ENCODE measurements at regions of chr14 and their contacts with region 1.

Region 1: DNA sequence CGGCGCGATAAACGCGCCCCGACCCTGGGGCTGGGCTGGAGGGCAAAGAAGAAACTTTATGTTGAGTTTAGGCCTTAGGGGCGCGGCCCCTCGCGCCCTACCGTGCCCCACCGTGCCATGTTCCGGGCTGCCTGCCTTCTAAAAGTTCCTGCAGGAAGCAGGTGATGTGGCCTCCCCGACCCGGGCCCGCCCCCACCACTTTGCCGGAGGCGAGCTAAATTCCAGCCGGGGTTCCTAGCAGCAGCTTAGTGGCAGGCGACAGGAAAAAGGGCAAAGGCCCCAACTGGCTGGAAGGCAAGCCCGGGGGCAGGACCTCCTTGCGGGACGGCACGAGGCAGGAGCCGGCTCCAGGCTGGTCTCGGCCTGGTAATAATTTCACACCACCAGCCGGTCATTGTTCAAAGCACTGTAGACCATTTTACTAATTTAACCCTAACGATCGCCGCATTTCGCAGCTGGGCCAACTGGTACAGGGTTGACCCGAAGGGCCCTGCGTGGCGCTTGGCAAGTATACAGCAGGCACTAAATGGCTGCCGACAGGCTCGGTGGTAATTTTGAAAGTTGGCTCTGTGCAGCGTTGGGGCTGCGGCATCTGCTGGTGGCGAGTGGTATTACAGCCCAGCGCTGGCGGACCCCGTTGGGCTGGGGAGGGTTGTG is 895 bp upstream of the CCDC88C start:
- DNase-seq: no peak
- ATAC-seq: peak; percentile 49
- H3K4me3 ChIP-seq: peak overlapping the region; percentile 43
- H3K27ac ChIP-seq: peak overlapping the region; percentile 61
- H3K4me1 ChIP-seq: peaks cover 26% of the 10 kb centered on the region
- H3K27me3 ChIP-seq: no peaks in the 10 kb centered on the region
- CTCF ChIP-seq: peak; percentile 98 to 99 (median 99); a peak in 5 of 6 replicates
- EP300 ChIP-seq: no peak
- POLR2A ChIP-seq: no peak
- RAD21 ChIP-seq: peak; percentile 96

Region 2: GRCh38 chr14:91317381-91318308 is 100.9 kb before region 1 on chr14:
- CTCF ChIA-PET with region 1: interaction called, 242 read pairs
- POLR2A ChIA-PET with region 1: interaction called, 8 read pairs
- RAD21 ChIA-PET with region 1: interaction called, 160 read pairs
- SMC1A ChIA-PET with region 1: interaction called, 210 read pairs
- in situ Hi-C with region 1: loop called (anchors 5 kb)
- intact Hi-C with region 1: no loop called
- DNase-seq: no peak
- ATAC-seq: peak; percentile 22
- H3K4me3 ChIP-seq: no peak overlapping the region
- H3K27ac ChIP-seq: peak overlapping the region; percentile 80
- H3K4me1 ChIP-seq: peaks cover 47% of the 10 kb centered on the region
- H3K27me3 ChIP-seq: no peaks in the 10 kb centered on the region
- CTCF ChIP-seq: 0 out of 6 replicates have a peak, but pooled peaks of 1 of the 3 experiments have one; percentile 11
- EP300 ChIP-seq: no peak
- POLR2A ChIP-seq: peak; percentile 57
- RAD21 ChIP-seq: no peak

Region 3: DNA sequence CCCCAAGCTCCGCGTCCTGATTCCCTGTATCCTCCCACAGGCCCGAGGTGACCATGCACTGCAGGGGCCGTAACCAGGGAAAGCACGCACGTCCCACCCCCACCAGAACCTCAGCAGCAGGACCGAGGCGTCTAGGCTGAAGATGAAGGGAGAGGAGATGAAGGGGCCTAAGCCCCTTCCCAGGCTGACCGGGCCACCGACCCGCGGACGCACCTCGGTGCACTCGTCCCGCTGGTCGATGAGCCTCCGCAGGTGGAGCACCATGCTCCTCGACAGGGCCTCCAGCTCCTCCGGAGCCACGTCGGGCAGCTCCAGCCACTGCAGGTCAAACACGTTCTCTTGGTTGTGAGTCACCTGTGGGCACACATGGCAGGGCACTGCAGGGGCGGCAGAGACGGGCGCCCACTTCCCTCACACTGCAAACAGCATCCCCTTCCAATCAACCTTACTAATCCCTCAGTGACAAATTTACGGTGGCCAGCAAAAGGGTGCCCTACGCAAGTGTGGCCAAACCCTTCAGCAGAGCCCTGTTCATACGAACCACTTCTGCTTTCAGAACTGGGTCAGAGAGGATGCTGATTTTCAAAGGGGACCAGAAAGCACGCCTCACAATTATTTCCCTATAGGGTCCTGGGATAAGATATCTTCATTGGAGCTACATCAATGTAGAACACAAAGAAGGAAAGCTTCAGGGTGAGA is 78.7 kb before region 1 on chr14:
- CTCF ChIA-PET with region 1: interaction called, 4 read pairs
- POLR2A ChIA-PET with region 1: interaction called, 3 read pairs
- RAD21 ChIA-PET with region 1: interaction called, 21 read pairs
- SMC1A ChIA-PET with region 1: interaction called, 14 read pairs
- in situ Hi-C with region 1: no loop called
- intact Hi-C with region 1: no loop called
- DNase-seq: no peak
- ATAC-seq: no peak
- H3K4me3 ChIP-seq: no peak overlapping the region
- H3K27ac ChIP-seq: no peak overlapping the region
- H3K4me1 ChIP-seq: peaks cover 1% of the 10 kb centered on the region
- H3K27me3 ChIP-seq: no peaks in the 10 kb centered on the region
- CTCF ChIP-seq: no peak
- EP300 ChIP-seq: no peak
- POLR2A ChIP-seq: peak; percentile 15; the same call in 1 of the 2 replicates
- RAD21 ChIP-seq: no peak

Region 4: DNA sequence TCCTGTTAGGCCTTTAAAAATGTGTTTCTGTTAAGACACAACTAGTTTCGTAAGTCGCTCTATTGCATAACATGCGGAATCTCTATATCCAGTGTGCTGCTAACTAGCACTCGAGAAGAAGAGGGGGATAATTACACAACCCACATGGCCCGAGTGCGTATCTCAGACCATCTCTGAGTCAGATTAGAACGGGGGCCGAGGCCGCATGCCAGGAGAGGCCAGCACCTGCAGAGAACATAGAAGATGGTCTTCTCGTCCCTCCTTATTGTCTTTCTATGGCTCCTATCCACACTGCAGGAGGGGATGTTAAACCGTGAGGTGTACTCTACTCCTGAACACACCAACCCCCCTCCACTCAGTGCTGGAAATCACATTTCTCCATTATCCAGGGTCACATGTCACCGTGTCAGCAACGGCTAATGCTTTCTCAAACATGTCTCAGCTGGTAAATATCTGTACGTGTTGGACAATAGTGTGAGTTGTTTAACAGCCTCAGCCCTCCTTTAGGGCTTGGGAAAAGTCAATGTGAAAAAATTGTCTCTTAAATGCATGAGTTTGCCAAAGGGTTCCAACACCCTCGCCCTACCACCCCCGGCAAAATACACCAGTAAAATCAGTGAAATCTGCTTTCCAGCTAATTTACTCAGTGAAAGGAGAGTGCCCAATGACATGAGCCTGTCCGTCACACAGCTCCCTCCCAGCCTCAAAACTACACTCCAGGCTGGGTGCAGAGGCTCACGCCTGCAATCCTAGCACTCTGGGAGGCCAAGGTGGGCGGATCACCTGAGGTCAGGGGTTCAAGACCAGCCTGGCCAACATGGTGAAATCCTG is 57.1 kb before region 1 on chr14:
- CTCF ChIA-PET with region 1: interaction called, 70 read pairs
- POLR2A ChIA-PET with region 1: interaction called, 140 read pairs
- RAD21 ChIA-PET with region 1: interaction called, 236 read pairs
- SMC1A ChIA-PET with region 1: interaction called, 205 read pairs
- in situ Hi-C with region 1: no loop called
- intact Hi-C with region 1: loop called (anchors 2 kb)
- DNase-seq: no peak
- ATAC-seq: no peak
- H3K4me3 ChIP-seq: no peak overlapping the region
- H3K27ac ChIP-seq: no peak overlapping the region
- H3K4me1 ChIP-seq: peaks cover 61% of the 10 kb centered on the region
- H3K27me3 ChIP-seq: no peaks in the 10 kb centered on the region
- CTCF ChIP-seq: no peak
- EP300 ChIP-seq: no peak
- POLR2A ChIP-seq: no peak
- RAD21 ChIP-seq: no peak

Region 5: DNA sequence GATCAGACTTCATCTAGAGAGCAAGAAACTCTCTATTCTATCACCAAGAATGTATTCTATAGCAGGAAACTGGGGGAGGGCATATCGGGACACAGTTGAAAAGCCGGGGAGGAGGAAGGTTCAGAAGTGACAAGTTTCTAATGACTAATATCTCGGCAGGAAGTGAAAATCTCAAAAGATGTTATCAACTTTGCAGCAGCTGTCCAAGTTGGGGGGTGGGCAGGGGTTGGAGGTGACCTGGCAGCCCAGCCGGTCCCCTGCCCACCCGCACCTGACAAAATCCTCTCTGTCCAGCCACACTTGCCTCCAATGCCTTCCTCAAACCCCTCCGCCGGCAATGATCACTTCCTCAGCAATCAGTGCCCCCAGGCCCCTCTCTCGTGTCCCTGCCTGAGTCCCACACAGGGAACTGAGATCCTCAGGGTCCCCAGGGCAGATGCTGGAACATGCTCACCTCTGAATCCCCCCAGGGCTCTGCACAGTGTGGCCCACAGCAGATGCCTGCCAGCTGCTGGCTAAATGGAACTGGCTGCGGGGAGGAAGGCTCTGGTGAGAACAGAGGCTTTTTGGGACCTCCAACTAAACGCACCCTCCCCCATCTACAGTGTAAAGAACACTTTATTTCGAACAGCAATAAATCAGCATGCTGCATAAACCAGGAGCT is 44.8 kb before region 1 on chr14:
- CTCF ChIA-PET with region 1: interaction called, 35 read pairs
- POLR2A ChIA-PET with region 1: interaction called, 42 read pairs
- RAD21 ChIA-PET with region 1: interaction called, 104 read pairs
- SMC1A ChIA-PET with region 1: interaction called, 172 read pairs
- in situ Hi-C with region 1: no loop called
- intact Hi-C with region 1: loop called (anchors 2 kb)
- DNase-seq: peak; percentile 80
- ATAC-seq: peak; percentile 70
- H3K4me3 ChIP-seq: peak overlapping the region; percentile 41
- H3K27ac ChIP-seq: peak overlapping the region; percentile 99
- H3K4me1 ChIP-seq: peaks cover 96% of the 10 kb centered on the region
- H3K27me3 ChIP-seq: no peaks in the 10 kb centered on the region
- CTCF ChIP-seq: no peak
- EP300 ChIP-seq: peak; percentile 92 to 96
- POLR2A ChIP-seq: no peak
- RAD21 ChIP-seq: peak; percentile 26; the same call in 1 of the 2 replicates

Region 6: GRCh38 chr14:91396959-91397815 is 21.3 kb before region 1 on chr14:
- CTCF ChIA-PET with region 1: interaction called, 100 read pairs
- POLR2A ChIA-PET with region 1: interaction called, 69 read pairs
- RAD21 ChIA-PET with region 1: interaction called, 110 read pairs
- SMC1A ChIA-PET with region 1: interaction called, 131 read pairs
- in situ Hi-C with region 1: no loop called
- intact Hi-C with region 1: no loop called
- DNase-seq: no peak
- ATAC-seq: peak; percentile 83
- H3K4me3 ChIP-seq: peak overlapping the region; percentile 66
- H3K27ac ChIP-seq: peak overlapping the region; percentile 67
- H3K4me1 ChIP-seq: peaks cover 64% of the 10 kb centered on the region
- H3K27me3 ChIP-seq: no peaks in the 10 kb centered on the region
- CTCF ChIP-seq: no peak
- EP300 ChIP-seq: no peak
- POLR2A ChIP-seq: peak; percentile 53; the same call in 1 of the 2 replicates
- RAD21 ChIP-seq: no peak

Region 7: GRCh38 chr14:91466192-91466591 is 47.7 kb after region 1 on chr14:
- CTCF ChIA-PET with region 1: no interaction called
- POLR2A ChIA-PET with region 1: no interaction called
- RAD21 ChIA-PET with region 1: no interaction called
- SMC1A ChIA-PET with region 1: no interaction called
- in situ Hi-C with region 1: no loop called
- intact Hi-C with region 1: no loop called
- DNase-seq: no peak
- ATAC-seq: no peak
- H3K4me3 ChIP-seq: no peak overlapping the region
- H3K27ac ChIP-seq: no peak overlapping the region
- H3K4me1 ChIP-seq: peaks cover 9% of the 10 kb centered on the region
- H3K27me3 ChIP-seq: no peaks in the 10 kb centered on the region
- CTCF ChIP-seq: no peak
- EP300 ChIP-seq: no peak
- POLR2A ChIP-seq: no peak
- RAD21 ChIP-seq: no peak